Activated B cell treated with CpG ODN at 0.5 μM for 24 hours (primary cell): ENCODE measurements at regions of chr7 and their contacts with region 1.

Region 1: DNA sequence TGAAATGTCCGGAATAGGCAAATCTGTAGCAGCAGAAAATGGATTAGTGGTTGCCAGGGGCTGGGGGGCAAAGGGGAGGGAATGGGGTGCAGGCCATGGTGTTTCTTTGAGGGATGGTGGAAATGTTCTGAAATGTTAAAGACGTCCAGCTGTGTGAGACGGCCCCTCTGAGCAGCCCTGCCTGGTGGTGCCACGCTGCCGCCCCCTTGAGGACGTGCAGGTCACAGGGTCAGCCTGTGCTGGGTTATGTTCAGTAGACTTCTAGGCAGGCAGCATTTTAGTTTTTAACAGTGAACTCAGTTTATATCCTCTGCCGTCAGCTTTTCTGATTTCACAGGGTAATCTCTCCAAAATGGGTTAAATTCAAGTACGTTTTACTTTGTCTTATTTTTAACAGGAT is 9.4 kb downstream of the NUB1 start:
- DNase-seq: peak; percentile 35
- ATAC-seq: peak; percentile 13
- H3K4me3 Mint-ChIP-seq: no peak overlapping the region
- H3K27ac Mint-ChIP-seq: peak overlapping the region; percentile 94
- H3K4me1 Mint-ChIP-seq: peaks cover 51% of the 10 kb centered on the region
- H3K27me3 Mint-ChIP-seq: no peaks in the 10 kb centered on the region
- CTCF ChIP-seq: no peak

Region 2: DNA sequence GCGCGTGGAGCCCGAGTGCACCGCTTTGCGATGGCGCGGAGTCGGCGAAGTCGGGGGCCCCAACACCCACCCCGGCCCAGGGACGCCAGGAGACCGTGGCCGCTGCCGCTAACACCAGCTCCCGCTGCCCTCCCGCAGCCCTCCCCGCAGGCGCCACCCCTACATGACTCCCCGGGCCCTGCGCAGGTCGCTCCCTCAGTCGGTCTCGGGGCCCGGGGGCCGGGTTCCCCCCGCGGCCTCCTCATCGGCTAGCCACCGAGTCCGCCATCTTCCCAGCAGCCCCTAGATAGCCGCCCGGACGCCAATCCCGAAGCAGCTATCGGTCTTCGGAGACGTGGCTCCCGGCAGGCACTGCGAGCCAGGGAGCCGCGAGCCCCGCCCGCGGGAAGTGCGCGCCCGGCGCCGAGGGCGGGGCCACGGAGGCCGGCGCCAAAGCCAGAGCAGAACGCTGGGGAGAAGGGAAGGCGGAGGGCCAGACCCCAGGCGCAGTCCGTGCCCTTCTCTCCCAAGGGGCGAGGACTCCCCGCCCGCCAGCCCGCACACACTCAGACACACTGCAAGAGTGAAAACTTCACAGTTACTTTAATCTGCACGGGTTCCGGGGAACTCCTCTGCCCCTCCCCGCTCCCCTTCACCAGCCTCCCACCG is 270.4 kb before region 1 on chr7 and contains the start of gene FASTK:
- CTCF ChIA-PET with region 1: no interaction called
- POLR2A ChIA-PET with region 1: no interaction called
- intact Hi-C with region 1: loop called (anchors 2 kb)
- DNase-seq: peak; percentile 81
- ATAC-seq: peak; percentile 83
- H3K4me3 Mint-ChIP-seq: peak within 1 kb of the TSS; percentile 91
- H3K27ac Mint-ChIP-seq: peak within 1 kb of the TSS; percentile 70
- H3K4me1 Mint-ChIP-seq: peaks cover 49% of the 10 kb centered on the region
- H3K27me3 Mint-ChIP-seq: peaks cover 8% of the 10 kb centered on the region
- CTCF ChIP-seq: no peak
- total RNA-seq, gene FASTK: 97.6 and 103 TPM in 2 replicates

Region 3: DNA sequence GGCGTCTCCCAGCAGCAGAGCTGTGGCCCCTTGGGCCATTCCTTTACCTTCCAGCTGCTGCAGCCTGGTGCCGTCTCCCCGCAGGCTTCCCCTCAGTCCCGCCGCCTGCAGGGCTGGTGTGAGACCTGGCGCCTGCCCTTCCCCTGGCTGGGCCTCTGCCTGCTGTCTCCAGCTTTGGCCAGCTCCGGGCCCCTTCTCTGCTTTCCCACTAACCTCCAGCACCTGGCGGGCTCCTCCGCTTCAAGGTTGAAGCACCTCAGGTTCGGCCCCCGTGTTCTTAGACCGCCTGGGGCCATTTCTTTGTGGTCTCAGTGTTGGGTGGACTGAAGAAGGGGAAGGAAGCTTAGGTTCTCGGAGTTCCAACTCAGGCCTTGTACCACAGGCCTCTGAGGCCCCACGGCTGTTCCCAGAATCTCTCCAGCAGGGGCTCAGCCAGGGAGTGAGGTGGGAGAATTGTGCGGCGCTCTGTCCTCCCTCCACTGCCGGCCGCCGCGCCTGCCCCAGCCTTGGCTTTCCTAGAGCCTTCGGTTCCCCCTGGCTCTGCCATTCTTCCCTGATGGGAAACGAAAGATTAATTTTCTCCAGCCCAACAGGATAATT is 213.9 kb before region 1 on chr7:
- CTCF ChIA-PET with region 1: no interaction called
- POLR2A ChIA-PET with region 1: no interaction called
- intact Hi-C with region 1: no loop called
- DNase-seq: peak; percentile 12
- ATAC-seq: no peak
- H3K4me3 Mint-ChIP-seq: no peak overlapping the region
- H3K27ac Mint-ChIP-seq: no peak overlapping the region
- H3K4me1 Mint-ChIP-seq: no peaks in the 10 kb centered on the region
- H3K27me3 Mint-ChIP-seq: no peaks in the 10 kb centered on the region
- CTCF ChIP-seq: no peak

Region 4: GRCh38 chr7:151244196-151244840 is 106.7 kb before region 1 on chr7:
- CTCF ChIA-PET with region 1: interaction called, 3 read pairs
- POLR2A ChIA-PET with region 1: interaction called, 3 read pairs
- intact Hi-C with region 1: loop called (anchors 1 kb)
- DNase-seq: no peak
- ATAC-seq: peak; percentile 15
- H3K4me3 Mint-ChIP-seq: peak overlapping the region; percentile 69
- H3K27ac Mint-ChIP-seq: peak overlapping the region; percentile 53
- H3K4me1 Mint-ChIP-seq: peaks cover 47% of the 10 kb centered on the region
- H3K27me3 Mint-ChIP-seq: peaks cover 20% of the 10 kb centered on the region
- CTCF ChIP-seq: no peak

Region 5: GRCh38 chr7:151336027-151336708 is 14.9 kb before region 1 on chr7:
- CTCF ChIA-PET with region 1: interaction called, 27 read pairs
- POLR2A ChIA-PET with region 1: interaction called, 20 read pairs
- intact Hi-C with region 1: loop called (anchors 2 kb)
- DNase-seq: no peak
- ATAC-seq: no peak
- H3K4me3 Mint-ChIP-seq: peak overlapping the region; percentile 1
- H3K27ac Mint-ChIP-seq: peak overlapping the region; percentile 22
- H3K4me1 Mint-ChIP-seq: peaks cover 33% of the 10 kb centered on the region
- H3K27me3 Mint-ChIP-seq: no peaks in the 10 kb centered on the region
- CTCF ChIP-seq: no peak

Region 6: GRCh38 chr7:151381348-151382078 is 30.5 kb after region 1 on chr7:
- CTCF ChIA-PET with region 1: no interaction called
- POLR2A ChIA-PET with region 1: no interaction called
- intact Hi-C with region 1: loop called (anchors 2 kb)
- DNase-seq: peak; percentile 57
- ATAC-seq: peak; percentile 78
- H3K4me3 Mint-ChIP-seq: peak overlapping the region; percentile 83
- H3K27ac Mint-ChIP-seq: peak overlapping the region; percentile 61
- H3K4me1 Mint-ChIP-seq: peaks cover 26% of the 10 kb centered on the region
- H3K27me3 Mint-ChIP-seq: peaks cover 2% of the 10 kb centered on the region
- CTCF ChIP-seq: no peak

Region 7: GRCh38 chr7:151436446-151437158 is 85.6 kb after region 1 on chr7:
- CTCF ChIA-PET with region 1: no interaction called
- POLR2A ChIA-PET with region 1: no interaction called
- intact Hi-C with region 1: no loop called
- DNase-seq: no peak
- ATAC-seq: no peak
- H3K4me3 Mint-ChIP-seq: no peak overlapping the region
- H3K27ac Mint-ChIP-seq: no peak overlapping the region
- H3K4me1 Mint-ChIP-seq: peaks cover 9% of the 10 kb centered on the region
- H3K27me3 Mint-ChIP-seq: peaks cover 25% of the 10 kb centered on the region
- CTCF ChIP-seq: no peak

Region 8: GRCh38 chr7:151448261-151449252 is 97.5 kb after region 1 on chr7:
- CTCF ChIA-PET with region 1: interaction called, 21 read pairs
- POLR2A ChIA-PET with region 1: interaction called, 3 read pairs
- intact Hi-C with region 1: loop called (anchors 1 kb)
- DNase-seq: peak; percentile 70
- ATAC-seq: peak; percentile 86
- H3K4me3 Mint-ChIP-seq: peak overlapping the region; percentile 79
- H3K27ac Mint-ChIP-seq: no peak overlapping the region
- H3K4me1 Mint-ChIP-seq: peaks cover 3% of the 10 kb centered on the region
- H3K27me3 Mint-ChIP-seq: peaks cover 14% of the 10 kb centered on the region
- CTCF ChIP-seq: no peak

Region 9: GRCh38 chr7:151936207-151936606 is 585.2 kb after region 1 on chr7:
- CTCF ChIA-PET with region 1: no interaction called
- POLR2A ChIA-PET with region 1: no interaction called
- intact Hi-C with region 1: loop called (anchors 5 kb)
- DNase-seq: no peak
- ATAC-seq: peak; percentile 78
- H3K4me3 Mint-ChIP-seq: peak overlapping the region; percentile 77
- H3K27ac Mint-ChIP-seq: peak overlapping the region; percentile 94
- H3K4me1 Mint-ChIP-seq: peaks cover 45% of the 10 kb centered on the region
- H3K27me3 Mint-ChIP-seq: peaks cover 3% of the 10 kb centered on the region
- CTCF ChIP-seq: no peak